Right cardiac atrium (tissue), 5 donors: ENCODE measurements at regions of chr10 and their contacts with region 1.

Region 1: GRCh38 chr10:15901889-15902288 is 41.6 kb upstream of the MINDY3 start:
- DNase-seq: no peak
- ATAC-seq: no peak
- H3K4me3 ChIP-seq: no peak overlapping the region
- H3K27ac ChIP-seq: no peak overlapping the region
- H3K4me1 ChIP-seq: no peaks in the 10 kb centered on the region
- H3K27me3 ChIP-seq: no peaks in the 10 kb centered on the region

Region 2: DNA sequence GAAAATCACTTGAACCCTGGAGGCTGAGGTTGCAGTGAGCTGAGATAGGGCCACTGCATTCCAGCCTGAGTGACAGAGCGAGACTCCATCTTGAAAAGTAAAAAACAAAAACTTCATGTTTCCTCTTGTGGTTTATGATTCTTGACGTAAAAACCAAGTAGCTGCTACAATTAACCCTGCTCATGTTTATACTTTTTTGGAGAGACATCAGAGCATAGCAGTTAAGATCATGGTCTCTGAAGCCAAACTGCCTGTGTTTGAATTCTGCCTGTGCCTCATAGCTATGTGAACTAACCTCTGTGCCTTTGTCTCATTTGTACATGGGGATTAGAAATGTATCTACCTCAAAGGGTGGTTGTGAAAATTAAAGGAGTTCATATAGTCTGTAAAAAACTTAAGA is 996.0 kb before region 1 on chr10:
- intact Hi-C with region 1: no loop called
- DNase-seq: no peak
- ATAC-seq: no peak
- H3K4me3 ChIP-seq: no peak overlapping the region
- H3K27ac ChIP-seq: no peak overlapping the region
- H3K4me1 ChIP-seq: no peaks in the 10 kb centered on the region
- H3K27me3 ChIP-seq: no peaks in the 10 kb centered on the region

Region 3: DNA sequence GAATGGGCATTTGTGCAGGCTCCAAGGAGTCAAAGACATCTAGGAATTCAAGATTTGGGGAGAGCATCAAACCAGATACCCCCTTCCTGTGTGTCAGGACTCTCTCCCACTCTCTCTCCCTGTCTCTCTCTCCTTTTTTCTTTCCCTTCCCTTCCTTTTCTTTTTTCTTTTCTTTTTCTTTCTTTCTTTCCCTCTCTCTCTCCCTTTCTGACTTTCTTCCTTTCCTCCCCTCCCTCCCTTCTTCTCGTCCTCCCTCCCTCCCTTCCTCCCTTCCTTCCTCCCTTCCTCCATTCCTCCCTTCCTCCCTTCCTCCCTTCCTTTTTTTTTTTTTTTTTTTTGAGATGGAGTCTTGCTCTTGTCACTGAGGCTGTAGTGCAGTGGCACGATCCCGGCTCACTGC is 17.4 kb before region 1 on chr10:
- intact Hi-C with region 1: no loop called
- DNase-seq: no peak
- ATAC-seq: no peak
- H3K4me3 ChIP-seq: no peak overlapping the region
- H3K27ac ChIP-seq: no peak overlapping the region
- H3K4me1 ChIP-seq: no peaks in the 10 kb centered on the region
- H3K27me3 ChIP-seq: no peaks in the 10 kb centered on the region

Region 4: DNA sequence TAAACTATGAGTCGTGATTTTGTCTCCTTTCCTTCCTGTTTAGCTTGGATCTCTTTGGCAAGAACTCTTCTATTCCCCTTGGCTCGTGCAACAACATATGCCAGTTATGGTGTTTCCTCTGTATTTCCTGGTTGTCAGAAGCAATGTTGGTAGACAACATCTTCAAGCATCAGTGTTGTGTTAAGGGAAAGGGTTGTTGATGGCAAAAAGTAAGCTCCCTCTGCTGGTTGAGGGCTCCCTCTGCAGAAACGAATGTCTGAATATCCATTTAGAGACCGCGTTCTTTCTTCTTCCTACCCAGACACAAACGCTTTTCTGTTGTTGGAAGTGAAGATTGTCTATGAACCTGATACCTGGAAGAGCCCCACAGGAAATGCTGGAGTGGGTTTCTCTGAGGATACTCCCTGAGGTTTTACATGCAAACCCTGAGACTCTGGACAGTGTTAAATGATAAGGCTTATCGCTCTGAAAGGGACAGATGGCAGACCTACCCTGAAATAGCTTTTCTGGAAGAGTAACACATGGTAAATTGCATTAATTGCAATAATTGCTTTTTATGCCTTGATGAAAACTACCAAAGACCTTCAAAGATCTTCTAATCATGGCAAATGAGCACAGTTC is 643.3 kb after region 1 on chr10:
- intact Hi-C with region 1: loop called in 1 of 4 experiments (anchors 10 kb)
- DNase-seq: no peak
- ATAC-seq: peak; percentile 24 to 47
- H3K4me3 ChIP-seq: no peak overlapping the region
- H3K27ac ChIP-seq: no peak overlapping the region
- H3K4me1 ChIP-seq: no peaks in the 10 kb centered on the region
- H3K27me3 ChIP-seq: no peaks in the 10 kb centered on the region

Region 5: DNA sequence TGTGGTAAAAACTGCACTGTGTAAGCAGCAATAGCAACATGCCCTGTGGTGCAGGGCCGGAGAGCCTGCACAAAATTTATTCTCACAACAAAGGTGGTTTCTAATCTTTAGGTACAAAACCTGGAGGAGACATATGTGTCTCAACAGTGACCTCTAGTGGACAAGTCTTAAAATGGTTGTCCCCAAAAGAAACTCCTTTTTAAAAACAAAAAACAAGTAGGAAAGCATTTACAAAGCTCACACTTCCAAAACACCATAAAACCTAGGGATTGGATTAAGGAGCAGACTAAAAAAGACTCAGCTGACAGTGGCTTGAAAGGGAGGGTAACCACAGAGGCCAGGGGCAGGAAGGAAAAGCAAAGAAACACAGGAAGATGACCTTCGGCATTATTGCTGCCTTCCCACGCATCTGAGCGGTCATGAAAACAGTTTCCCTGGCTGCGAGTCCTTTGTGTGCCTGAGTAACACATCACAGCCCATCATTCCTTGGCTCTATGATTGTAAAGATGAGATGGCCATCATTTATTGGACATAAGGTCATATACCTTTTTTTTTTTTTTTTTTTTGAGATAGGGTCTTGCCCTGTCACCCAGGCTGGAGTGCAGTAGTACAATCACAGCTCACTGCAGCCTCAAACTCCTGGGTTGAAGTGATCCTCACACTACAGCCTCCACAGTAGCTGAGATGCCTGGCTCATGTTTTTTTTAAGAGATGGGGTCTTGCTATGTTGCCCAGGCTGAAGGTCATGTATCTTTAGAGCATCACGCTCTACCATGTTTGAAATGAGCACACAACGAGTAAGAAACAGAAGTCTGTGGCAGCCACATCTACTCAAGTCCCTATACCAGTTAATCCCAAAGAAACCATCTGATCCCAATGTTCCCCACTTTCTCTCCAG is 875.8 kb after region 1 on chr10:
- intact Hi-C with region 1: loop called in 2 of 4 experiments (anchors 5 to 10 kb)
- DNase-seq: peak in 1 of 3 donors; percentile 24
- ATAC-seq: peak; percentile 62 to 95
- H3K4me3 ChIP-seq: no peak overlapping the region
- H3K27ac ChIP-seq: no peak overlapping the region
- H3K4me1 ChIP-seq: peaks cover 2% of the 10 kb centered on the region
- H3K27me3 ChIP-seq: no peaks in the 10 kb centered on the region

Region 6: GRCh38 chr10:16809074-16809718 is 907.3 kb after region 1 on chr10:
- intact Hi-C with region 1: loop called in 1 of 4 experiments (anchors 10 kb)
- DNase-seq: peak in 2 of 3 donors; percentile 33 to 76
- ATAC-seq: peak; percentile 55 to 76
- H3K4me3 ChIP-seq: no peak overlapping the region
- H3K27ac ChIP-seq: no peak overlapping the region
- H3K4me1 ChIP-seq: peaks cover 3% of the 10 kb centered on the region
- H3K27me3 ChIP-seq: no peaks in the 10 kb centered on the region